Aorta (tissue), 5 donors: ENCODE measurements at regions of chr1 and their contacts with region 1.

Region 1: DNA sequence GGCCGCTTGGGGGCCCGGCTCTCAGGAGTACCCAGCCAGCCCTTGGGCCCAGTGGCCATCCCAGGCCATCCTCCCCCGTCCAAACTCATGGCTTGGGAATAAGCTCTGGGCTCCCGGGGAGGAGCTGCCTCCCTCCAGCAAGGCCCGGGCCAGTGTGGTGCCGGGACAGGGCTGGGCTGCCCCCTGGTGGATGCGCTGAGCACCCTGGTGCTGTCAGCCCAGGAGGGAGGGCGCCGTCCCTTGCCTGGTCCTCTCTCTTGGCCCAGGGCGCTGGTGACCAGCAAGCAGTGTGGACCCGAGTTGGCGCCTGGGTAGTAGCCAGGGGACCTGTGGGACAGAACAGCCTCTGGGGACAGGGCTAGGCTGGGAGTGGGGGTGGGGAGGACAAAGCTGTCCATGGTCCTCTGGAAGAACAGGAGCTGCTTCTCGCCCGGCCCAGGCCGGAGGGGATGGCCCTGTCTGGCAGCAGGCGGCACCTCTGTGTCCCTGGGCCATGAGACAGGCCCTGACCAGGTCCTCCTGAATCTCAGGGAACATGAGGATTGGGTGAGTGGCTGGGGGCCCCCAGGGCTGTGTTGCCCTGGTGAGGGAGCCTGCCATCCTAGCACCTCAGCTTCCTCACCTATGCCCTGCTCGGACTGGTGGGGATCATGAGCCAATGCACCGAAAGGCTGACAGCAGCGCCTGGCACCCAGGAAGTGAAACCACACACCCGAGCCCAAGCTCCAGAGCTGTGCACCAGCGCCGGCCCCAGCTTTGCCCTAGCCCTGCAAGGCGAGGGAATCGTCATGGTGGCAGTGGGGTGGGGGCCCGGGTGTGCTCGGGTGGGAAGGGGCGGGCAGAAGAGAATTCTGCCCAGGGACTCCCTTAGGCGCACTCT is 9.4 kb downstream of the MORN1 start:
- DNase-seq: peak; percentile 91 to 97
- ATAC-seq: peak; percentile 95
- H3K4me3 ChIP-seq: no peak overlapping the region
- H3K27ac ChIP-seq: no peak overlapping the region
- H3K4me1 ChIP-seq: no peaks in the 10 kb centered on the region
- H3K27me3 ChIP-seq: no peaks in the 10 kb centered on the region

Region 2: GRCh38 chr1:2314803-2315673 is 66.9 kb before region 1 on chr1:
- intact Hi-C with region 1: loop called (anchors 5 kb)
- DNase-seq: peak; percentile 77 to 89
- ATAC-seq: peak; percentile 39
- H3K4me3 ChIP-seq: peak overlapping the region; percentile 30 to 41
- H3K27ac ChIP-seq: peak overlapping the region in 1 of 2 donors; percentile 4
- H3K4me1 ChIP-seq: no peaks in the 10 kb centered on the region
- H3K27me3 ChIP-seq: no peaks in the 10 kb centered on the region

Region 3: DNA sequence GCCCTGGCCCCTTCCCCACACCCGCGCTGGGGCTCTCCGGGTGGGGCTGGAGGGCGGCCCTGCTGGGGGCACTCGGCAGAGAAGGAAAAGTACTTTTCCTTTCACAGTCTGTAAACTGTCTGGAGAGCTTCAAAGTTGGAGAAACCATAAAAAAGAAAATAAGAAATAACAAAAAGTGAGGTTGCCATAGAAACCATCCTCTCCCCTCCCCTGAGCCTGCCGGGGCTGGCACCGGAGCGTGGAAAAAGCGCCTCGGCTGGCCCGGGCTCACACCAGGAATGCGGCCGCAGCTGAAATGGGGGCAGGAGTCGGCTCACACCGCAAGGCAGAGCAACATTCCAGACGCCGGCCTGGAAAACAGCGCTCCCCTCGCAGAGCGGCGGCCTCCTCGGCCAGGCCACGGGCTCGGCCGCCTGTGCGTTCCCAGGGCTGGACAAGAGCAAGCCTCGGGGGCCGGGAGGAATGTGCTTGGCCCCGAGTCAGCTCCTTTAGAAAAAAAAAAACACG is 59.9 kb before region 1 on chr1:
- intact Hi-C with region 1: loop called in 1 of 2 experiments (anchors 5 kb)
- DNase-seq: peak; percentile 94 to 96
- ATAC-seq: peak; percentile 89
- H3K4me3 ChIP-seq: no peak overlapping the region
- H3K27ac ChIP-seq: peak overlapping the region; percentile 83 to 90
- H3K4me1 ChIP-seq: no peaks in the 10 kb centered on the region
- H3K27me3 ChIP-seq: no peaks in the 10 kb centered on the region

Region 4: DNA sequence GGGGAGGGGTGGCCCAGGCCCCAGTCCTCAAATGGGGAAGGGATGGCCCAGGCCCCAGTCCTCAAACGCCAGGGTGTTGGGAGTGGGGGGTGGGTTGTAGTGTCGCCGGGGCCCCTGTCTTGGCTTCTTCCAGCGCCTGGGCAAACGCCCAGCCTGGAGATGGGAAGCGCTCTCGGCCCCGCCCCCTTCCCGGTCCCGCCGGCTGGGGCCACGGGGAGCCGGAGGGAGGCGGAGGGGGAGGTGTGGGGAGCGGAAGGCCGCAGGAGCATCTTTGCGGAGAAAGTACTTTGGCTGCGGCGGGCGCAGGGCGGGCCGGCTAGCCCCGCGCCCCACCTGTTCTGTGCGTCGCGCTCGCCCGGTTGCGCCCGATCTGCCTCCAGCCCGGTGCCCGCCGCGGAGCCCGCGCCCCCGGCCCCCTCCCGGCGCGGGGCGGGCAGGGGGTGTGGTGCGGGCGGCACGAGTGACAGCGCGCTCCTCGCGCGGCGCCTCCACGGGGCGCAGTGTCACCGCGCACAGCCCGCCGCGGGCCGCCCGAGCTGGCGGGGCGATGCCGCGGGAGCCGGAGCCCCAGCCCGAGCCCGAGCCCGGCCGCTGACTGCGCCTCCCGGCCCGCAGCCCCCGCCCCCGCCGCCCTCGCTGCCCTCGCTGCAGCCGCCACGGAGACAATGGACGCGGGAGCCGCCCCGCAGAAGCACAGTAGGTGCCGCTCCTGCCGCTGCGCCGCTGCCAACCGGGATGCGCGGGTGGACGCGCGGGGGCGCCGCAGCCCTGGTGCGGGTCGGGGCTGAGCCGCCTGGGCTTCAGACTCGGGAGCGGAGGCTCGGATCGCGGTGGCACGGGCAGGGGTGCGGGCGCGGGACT is 61.5 kb after region 1 on chr1:
- intact Hi-C with region 1: no loop called
- DNase-seq: no peak
- ATAC-seq: no peak
- H3K4me3 ChIP-seq: no peak overlapping the region
- H3K27ac ChIP-seq: no peak overlapping the region
- H3K4me1 ChIP-seq: no peaks in the 10 kb centered on the region
- H3K27me3 ChIP-seq: no peaks in the 10 kb centered on the region